ENCODE measurements at regions of chr1 and their contacts with region 1.

Region 1: DNA sequence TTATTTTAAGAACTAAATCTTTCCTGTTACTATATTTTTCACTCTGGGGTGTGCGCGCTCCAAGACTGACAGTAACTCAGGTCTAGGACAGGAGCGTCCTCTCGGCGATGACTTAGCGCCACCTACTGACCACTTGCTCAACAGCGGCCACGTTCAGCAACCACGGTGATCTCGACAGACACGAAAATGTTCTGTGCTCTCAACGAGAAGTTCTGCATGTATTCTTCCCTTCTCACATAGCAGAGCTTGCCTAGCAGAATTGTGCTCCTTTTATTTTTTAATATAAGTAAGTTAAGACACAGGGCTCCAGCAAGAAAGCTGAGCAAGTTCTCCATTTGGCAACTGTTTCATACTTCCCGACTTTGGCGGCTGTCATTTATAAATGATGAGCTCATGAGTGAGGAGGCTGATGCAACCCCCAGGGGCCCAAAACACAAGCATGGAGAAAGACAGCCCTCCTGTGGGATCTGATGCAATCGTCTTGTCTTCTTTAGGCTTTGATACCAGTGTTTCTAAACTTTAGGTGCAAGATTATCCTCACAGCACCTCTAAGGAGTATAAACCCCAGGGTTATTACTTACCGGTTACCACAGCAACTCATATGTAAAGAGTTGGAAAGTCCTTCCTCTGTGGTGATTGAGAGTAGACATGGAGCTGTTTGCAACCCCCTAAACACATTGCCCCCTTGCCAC is 92.6 kb downstream of the HHIPL2 start:
- DNase-seq: peak; percentile 55 to 90
- H3K4me3 ChIP-seq: peak overlapping the region; percentile 42; the same call in 1 of the 2 replicates
- H3K27ac ChIP-seq: peak overlapping the region; percentile 30; the same call in 1 of the 2 replicates
- H3K4me1 ChIP-seq: 0 out of 2 replicates have a peak, but pooled peaks cover 10% of the 10 kb centered on the region
- H3K27me3 ChIP-seq: no peaks in the 10 kb centered on the region
- CTCF ChIP-seq: peak; percentile 97

Region 2: DNA sequence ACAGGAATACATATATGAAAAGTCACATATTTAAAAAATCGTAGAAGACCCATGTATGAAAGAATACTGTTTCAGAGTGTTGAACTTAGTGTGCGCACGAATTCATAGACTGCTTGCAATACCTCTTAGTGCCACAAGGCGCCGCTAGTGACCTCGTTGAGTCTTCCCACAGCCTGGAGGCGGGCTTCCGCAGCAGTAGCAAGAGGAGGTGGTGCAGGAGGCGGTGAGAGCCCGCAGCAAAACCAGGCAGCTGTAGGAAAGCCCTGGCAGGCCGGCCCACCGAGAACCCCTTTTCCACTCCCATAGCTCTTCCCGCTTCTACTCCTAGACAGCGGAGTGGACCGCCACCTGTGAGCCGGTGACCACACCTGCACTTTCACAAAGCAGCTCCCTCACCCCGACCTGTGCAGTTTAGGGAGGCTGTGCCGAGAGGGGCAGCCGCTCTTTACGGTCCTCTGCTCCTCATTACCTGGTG is 1645.1 kb before region 1 on chr1:
- CTCF ChIA-PET with region 1: no interaction called
- POLR2A ChIA-PET with region 1: no interaction called
- intact Hi-C with region 1: loop called (anchors 2 kb)
- DNase-seq: peak in 1 of 2 experiments; percentile 31
- H3K4me3 ChIP-seq: no peak overlapping the region
- H3K27ac ChIP-seq: no peak overlapping the region
- H3K4me1 ChIP-seq: no peaks in the 10 kb centered on the region
- H3K27me3 ChIP-seq: no peaks in the 10 kb centered on the region
- CTCF ChIP-seq: peak; percentile 87

Region 3: GRCh38 chr1:221263831-221264767 is 1191.2 kb before region 1 on chr1:
- CTCF ChIA-PET with region 1: interaction called, 4 read pairs
- POLR2A ChIA-PET with region 1: no interaction called
- intact Hi-C with region 1: loop called (anchors 10 kb)
- DNase-seq: peak; percentile 36 to 44
- H3K4me3 ChIP-seq: no peak overlapping the region
- H3K27ac ChIP-seq: no peak overlapping the region
- H3K4me1 ChIP-seq: no peaks in the 10 kb centered on the region
- H3K27me3 ChIP-seq: no peaks in the 10 kb centered on the region
- CTCF ChIP-seq: peak; percentile 57

Region 4: GRCh38 chr1:221478050-221478949 is 977.0 kb before region 1 on chr1:
- CTCF ChIA-PET with region 1: interaction called, 14 read pairs
- POLR2A ChIA-PET with region 1: interaction called, 3 read pairs
- intact Hi-C with region 1: loop called (anchors 1 kb)
- DNase-seq: peak; percentile 74 to 80
- H3K4me3 ChIP-seq: no peak overlapping the region
- H3K27ac ChIP-seq: no peak overlapping the region
- H3K4me1 ChIP-seq: peaks cover 13% of the 10 kb centered on the region
- H3K27me3 ChIP-seq: no peaks in the 10 kb centered on the region
- CTCF ChIP-seq: peak; percentile 79

Region 5: DNA sequence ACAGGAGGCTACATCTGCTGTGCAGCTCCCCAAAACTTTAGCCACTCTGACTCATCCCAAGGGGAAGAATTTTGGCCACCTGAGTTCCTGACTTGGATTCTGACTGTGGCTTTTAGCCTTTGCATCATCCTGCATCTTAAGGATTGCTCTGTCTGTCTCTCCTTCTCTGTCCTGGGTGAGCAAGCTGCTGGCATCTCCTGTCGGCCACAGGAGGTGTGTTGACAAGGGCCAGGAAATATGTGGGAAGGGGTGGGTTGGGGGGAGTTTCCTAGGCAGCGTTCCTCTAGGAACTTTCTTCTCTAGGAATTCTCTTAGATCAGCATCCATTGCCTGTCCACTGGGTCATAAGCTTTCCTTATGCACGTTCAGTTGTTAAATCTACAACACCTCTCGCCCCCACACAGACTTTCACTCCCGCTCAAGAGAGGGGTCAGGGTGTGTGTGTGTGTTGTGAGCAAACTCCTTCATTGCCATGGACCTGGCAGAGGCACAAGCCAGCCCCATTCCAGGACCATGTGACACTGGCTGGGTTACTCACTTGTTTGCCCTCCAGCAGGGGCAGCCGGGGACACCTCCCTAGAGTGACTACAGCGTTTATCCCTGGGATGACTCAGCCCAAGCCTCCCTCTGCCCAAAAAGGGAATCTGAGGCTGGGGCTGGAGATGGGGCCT is 568.5 kb before region 1 on chr1:
- CTCF ChIA-PET with region 1: interaction called, 3 read pairs
- POLR2A ChIA-PET with region 1: no interaction called
- intact Hi-C with region 1: loop called (anchors 1 kb)
- DNase-seq: peak; percentile 97 to 99
- H3K4me3 ChIP-seq: no peak overlapping the region; the same call in 1 of the 2 replicates
- H3K27ac ChIP-seq: peak overlapping the region; percentile 84
- H3K4me1 ChIP-seq: peaks cover 47% of the 10 kb centered on the region
- H3K27me3 ChIP-seq: no peaks in the 10 kb centered on the region
- CTCF ChIP-seq: no peak

Region 6: DNA sequence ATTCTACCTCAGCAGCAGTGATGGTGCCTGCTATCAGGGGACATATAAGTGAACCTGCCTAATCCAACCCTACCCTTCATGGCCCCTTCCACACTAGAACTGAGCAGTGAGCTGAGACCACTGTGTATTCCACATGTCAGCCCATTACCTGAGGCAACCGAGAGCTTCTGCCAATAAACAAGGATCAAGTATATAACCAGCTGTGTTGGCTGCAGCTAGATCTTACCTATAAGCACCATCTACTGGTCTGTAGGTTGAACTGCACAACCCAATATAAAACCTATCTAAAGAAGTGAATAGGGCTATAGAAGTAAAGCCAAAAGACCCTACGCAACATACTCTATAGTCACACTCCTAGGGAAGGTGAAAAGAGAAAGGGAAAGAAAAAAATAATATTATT is 284.3 kb before region 1 on chr1:
- CTCF ChIA-PET with region 1: no interaction called
- POLR2A ChIA-PET with region 1: no interaction called
- intact Hi-C with region 1: loop called (anchors 2 kb)
- DNase-seq: peak; percentile 3 to 38
- H3K4me3 ChIP-seq: no peak overlapping the region
- H3K27ac ChIP-seq: no peak overlapping the region
- H3K4me1 ChIP-seq: no peaks in the 10 kb centered on the region
- H3K27me3 ChIP-seq: no peaks in the 10 kb centered on the region
- CTCF ChIP-seq: peak; percentile 85

Region 7: DNA sequence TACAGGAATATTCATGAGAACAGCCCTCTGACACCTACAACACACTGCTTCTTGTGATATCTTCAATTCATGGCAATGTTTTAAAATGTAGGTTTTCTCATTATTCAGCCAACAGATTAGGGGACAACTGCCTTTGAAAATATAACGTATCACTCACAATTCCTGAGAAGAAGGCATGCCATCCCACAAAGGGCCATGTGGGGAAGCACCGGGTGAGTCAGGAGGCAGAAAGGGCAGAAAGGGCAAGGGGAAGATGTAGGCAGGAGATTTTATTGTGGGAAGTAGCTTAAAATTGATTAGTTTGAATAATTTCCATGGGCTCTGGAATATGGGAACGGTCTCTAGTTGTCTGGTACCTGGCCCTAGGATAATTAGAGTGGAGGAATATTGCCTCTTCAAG is 73.2 kb before region 1 on chr1:
- CTCF ChIA-PET with region 1: no interaction called
- POLR2A ChIA-PET with region 1: no interaction called
- intact Hi-C with region 1: no loop called
- DNase-seq: no peak
- H3K4me3 ChIP-seq: no peak overlapping the region
- H3K27ac ChIP-seq: no peak overlapping the region
- H3K4me1 ChIP-seq: no peaks in the 10 kb centered on the region
- H3K27me3 ChIP-seq: no peaks in the 10 kb centered on the region
- CTCF ChIP-seq: no peak

Region 8: DNA sequence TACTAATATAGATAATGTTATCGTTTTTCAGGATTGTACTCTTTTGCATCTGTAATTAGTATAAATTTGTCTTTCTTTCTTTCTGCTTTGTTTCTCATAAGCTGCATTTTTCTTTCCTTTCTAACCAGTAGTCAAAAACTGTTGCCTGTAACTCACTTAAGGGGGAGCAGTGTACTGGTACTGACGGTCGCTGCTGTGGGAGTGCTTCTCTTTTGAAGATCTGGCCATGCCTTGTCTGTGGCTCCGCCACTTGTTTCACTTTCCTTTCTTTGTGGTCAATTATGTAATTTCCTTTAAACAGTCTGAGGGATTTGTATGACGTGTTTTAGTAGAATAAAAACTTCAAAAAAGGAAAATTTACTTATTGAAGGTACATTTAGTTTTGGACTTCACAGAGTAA is 199.5 kb after region 1 on chr1:
- CTCF ChIA-PET with region 1: no interaction called
- POLR2A ChIA-PET with region 1: no interaction called
- intact Hi-C with region 1: no loop called
- DNase-seq: no peak
- H3K4me3 ChIP-seq: no peak overlapping the region
- H3K27ac ChIP-seq: no peak overlapping the region
- H3K4me1 ChIP-seq: no peaks in the 10 kb centered on the region
- H3K27me3 ChIP-seq: no peaks in the 10 kb centered on the region
- CTCF ChIP-seq: no peak

Measured in PC-9 (cell line).